ENCODE measurements at regions of chr2 and their contacts with region 1.

Region 1: GRCh38 chr2:223993621-223994232 is 36.5 kb downstream of the MRPL44 start:
- DNase-seq: peak; percentile 23
- H3K4me3 ChIP-seq: no peak overlapping the region
- H3K27ac ChIP-seq: no peak overlapping the region
- H3K4me1 ChIP-seq: no peaks in the 10 kb centered on the region
- H3K27me3 ChIP-seq: no peaks in the 10 kb centered on the region
- CTCF ChIP-seq: peak; percentile 88

Region 2: DNA sequence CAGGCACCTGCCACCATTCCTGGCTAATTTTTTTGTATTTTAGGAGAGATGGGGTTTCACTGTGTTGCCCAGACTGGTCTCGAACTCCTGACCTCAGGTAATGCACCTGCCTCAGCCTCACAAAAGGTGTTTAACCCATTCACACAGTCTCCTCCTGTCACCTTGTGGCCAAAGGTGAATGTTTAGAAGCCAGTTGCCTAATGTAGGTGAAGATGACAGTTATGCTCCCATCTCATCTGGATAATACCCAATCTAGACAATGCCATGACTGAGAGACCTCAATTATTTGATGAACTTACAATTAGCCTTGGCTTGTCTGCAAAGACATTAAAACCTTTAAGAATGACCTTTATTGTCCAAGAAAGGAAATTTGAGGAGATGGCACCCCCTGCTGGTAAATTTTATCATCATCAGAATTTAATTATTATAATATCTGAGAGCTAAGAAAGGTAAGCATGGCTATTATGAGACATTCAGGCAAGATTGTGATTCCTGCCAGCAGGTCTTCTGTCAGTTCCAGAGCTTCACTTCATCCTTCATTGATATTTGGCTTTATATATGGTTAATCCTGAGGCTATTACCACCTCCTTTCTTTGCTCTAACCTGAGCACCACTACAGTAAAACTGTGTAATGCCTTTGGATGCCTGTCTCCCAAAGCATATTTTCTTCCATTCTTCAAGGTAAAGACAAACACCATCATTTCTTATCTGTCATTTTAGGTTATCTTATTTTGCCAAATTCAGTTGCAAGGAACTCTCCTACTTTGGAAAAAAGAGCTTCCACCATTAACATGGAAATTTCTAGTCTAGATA is 290.6 kb after region 1 on chr2:
- intact Hi-C with region 1: loop called (anchors 5 kb)
- DNase-seq: no peak
- H3K4me3 ChIP-seq: no peak overlapping the region
- H3K27ac ChIP-seq: no peak overlapping the region
- H3K4me1 ChIP-seq: no peaks in the 10 kb centered on the region
- H3K27me3 ChIP-seq: peaks cover 52% of the 10 kb centered on the region
- CTCF ChIP-seq: peak; percentile 69

Measured in left ventricle myocardium inferior (tissue), 1 donor.